Uterus (tissue), 4 donors: ENCODE measurements at regions of chr6 and their contacts with region 1.

Region 1: DNA sequence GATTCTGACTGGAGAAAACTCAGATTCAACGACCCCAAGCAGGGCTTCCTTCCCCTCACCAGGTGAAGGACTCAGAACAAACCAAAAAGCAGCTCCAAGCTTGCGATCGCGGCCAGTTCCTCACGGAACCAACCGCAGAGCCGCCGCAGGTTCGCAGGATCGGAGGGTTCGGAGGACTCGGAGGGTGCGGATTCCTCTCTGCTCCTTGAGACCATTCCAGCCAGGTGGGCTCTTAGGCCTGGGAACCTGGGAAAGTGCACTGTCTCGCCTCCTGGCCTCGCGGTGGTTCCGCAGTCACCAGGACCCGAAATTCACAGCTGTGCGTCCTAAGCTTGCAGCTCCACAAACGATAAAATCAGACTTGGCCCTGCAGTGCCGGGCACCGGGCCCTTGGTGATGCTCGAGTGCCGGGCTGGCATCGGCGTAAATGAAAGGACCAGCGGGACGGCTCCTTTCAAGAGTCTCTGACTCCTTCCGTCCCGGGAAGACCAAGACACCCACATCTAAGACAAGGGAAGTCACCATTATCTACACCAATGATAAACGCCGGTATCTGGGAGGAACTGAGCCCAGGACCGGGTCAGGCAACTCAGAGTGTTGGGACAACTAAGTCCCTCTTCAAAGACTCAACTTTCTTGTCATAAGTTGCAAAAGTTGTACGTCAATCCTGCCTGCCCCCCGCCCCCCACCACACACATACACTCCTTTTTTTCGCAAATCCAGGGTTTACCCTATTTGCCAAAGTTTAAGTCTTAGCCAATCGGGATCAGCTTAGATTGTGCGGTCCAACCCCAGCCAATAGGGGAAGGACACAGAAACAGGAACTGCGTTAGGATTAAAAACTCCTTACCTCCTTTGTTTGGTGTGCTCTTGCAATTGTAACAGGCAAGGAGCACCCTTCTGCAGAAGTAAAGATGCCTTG is 69.8 kb upstream of the PRSS16 start:
- DNase-seq: peak; percentile 66 to 71
- H3K4me3 ChIP-seq: peak overlapping the region; percentile 82 to 88
- H3K27ac ChIP-seq: peak overlapping the region; percentile 84 to 87
- H3K4me1 ChIP-seq: no peaks in the 10 kb centered on the region
- H3K27me3 ChIP-seq: no peaks in the 10 kb centered on the region
- CTCF ChIP-seq: peak in 1 of 4 experiments; percentile 29
- POLR2A ChIP-seq: peak; percentile 35 to 44

Region 2: GRCh38 chr6:27230758-27231111 is 53.0 kb after region 1 on chr6:
- intact Hi-C with region 1: no loop called
- DNase-seq: no peak
- H3K4me3 ChIP-seq: no peak overlapping the region
- H3K27ac ChIP-seq: no peak overlapping the region
- H3K4me1 ChIP-seq: no peaks in the 10 kb centered on the region
- H3K27me3 ChIP-seq: peaks cover 0 to 45% of the 10 kb centered on the region in 2 donors
- CTCF ChIP-seq: no peak
- POLR2A ChIP-seq: no peak

Region 3: GRCh38 chr6:27422651-27423332 is 245.0 kb after region 1 on chr6:
- intact Hi-C with region 1: no loop called
- DNase-seq: no peak
- H3K4me3 ChIP-seq: no peak overlapping the region
- H3K27ac ChIP-seq: no peak overlapping the region
- H3K4me1 ChIP-seq: no peaks in the 10 kb centered on the region
- H3K27me3 ChIP-seq: no peaks in the 10 kb centered on the region
- CTCF ChIP-seq: no peak
- POLR2A ChIP-seq: no peak

Region 4: DNA sequence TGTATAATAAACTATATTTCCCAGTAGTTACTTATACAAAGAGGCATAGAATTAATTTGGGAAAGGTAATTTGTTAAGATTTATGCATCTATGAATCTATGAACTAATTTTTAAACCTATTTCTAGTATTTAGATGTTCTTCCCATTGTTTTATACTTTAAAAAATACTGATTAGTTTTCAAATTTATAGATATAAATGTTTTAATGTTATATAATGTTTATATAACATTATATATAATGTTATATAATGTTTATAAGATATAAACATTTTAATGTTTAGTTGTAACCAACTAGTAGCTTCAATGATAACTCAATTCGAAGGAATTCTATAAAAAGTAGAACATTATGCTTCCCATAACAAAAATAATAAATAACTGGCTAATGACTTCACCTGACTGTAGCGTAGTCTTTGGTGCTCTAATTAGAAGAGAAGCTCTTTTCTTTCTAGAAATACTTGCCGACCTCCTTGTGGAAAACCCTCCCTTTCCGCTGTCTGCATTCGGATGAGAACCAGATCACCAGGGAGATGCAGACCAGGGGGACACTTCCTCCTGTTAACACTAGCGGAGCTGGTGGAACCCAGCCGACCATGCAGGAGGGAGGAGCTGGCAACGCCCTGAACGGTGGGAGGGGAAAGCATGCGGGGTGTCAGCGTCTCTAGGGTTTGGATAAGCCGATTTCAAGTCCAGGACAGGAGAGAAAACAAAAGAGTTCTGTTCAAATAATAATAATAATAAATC is 576.1 kb after region 1 on chr6:
- intact Hi-C with region 1: loop called (anchors 10 kb)
- DNase-seq: peak; percentile 71 to 79
- H3K4me3 ChIP-seq: peak overlapping the region; percentile 64 to 97
- H3K27ac ChIP-seq: peak overlapping the region; percentile 1 to 94
- H3K4me1 ChIP-seq: no peaks in the 10 kb centered on the region
- H3K27me3 ChIP-seq: peaks cover 0 to 8% of the 10 kb centered on the region in 2 donors
- CTCF ChIP-seq: peak in 1 of 4 experiments; percentile 10
- POLR2A ChIP-seq: no peak